ENCODE measurements at regions of chr6 and their contacts with region 1.

Region 1: GRCh38 chr6:156776840-156777576 is at the start of gene ARID1B:
- DNase-seq: peak; percentile 94
- H3K4me3 Mint-ChIP-seq: peak within 1 kb of the TSS; percentile 94
- H3K27ac Mint-ChIP-seq: peak within 1 kb of the TSS; percentile 99
- H3K4me1 Mint-ChIP-seq: peaks cover 26% of the 10 kb centered on the region
- H3K27me3 Mint-ChIP-seq: no peaks in the 10 kb centered on the region
- total RNA-seq, gene ARID1B: 61.7 and 67.5 TPM in 2 replicates

Region 2: GRCh38 chr6:155314092-155314772 is 1462.8 kb before region 1 on chr6 and contains the start of gene TFB1M:
- intact Hi-C with region 1: loop called (anchors 5 kb)
- DNase-seq: peak; percentile 100
- H3K4me3 Mint-ChIP-seq: peak within 1 kb of the TSS; percentile 99
- H3K27ac Mint-ChIP-seq: peak within 1 kb of the TSS; percentile 98
- H3K4me1 Mint-ChIP-seq: peaks cover 27% of the 10 kb centered on the region
- H3K27me3 Mint-ChIP-seq: peaks cover 2% of the 10 kb centered on the region
- total RNA-seq, gene TFB1M: 36.8 and 41.4 TPM in 2 replicates

Region 3: DNA sequence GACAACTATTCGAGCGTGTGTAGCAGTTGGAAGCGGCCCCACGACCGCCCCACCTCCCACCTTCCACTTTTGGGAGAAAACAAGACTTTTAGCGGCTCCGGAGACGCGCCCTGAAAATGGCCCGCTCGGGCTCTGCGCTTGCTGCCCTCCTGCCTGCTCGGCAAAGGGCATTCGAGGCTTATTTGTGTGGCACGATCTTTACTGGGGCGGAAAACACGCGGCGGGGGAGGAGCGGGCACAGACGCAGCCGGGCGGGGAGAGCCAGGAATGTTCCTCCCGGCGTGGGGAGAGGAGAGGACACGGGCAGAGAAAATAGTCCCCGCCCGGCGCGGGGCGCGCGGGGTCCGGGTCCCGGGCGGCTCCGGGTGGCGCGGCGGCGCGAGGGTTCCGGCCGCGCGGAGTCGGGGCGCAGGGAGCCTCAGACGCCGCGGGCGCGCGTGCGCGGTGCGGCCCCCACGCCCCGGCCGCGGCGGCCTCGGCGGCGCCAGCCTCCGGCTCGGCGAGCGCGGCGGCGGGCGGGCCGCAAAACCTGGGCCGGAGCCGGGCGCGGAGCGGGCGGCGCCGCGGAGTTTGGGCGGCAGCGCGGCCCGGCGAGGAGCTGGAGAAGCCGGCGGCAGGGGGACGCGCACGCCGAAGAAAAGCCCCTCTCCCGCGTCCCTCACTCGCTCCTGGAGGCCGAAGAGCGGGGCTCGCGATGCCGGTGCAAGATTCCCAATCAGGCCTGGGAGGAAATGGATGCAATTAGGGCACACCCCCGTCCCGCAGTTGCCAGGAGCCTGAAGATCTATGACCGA is 89.8 kb before region 1 on chr6:
- intact Hi-C with region 1: loop called (anchors 1 kb)
- DNase-seq: peak; percentile 94
- H3K4me3 Mint-ChIP-seq: peak overlapping the region; percentile 89
- H3K27ac Mint-ChIP-seq: peak overlapping the region; percentile 94
- H3K4me1 Mint-ChIP-seq: peaks cover 20% of the 10 kb centered on the region
- H3K27me3 Mint-ChIP-seq: peaks cover 11% of the 10 kb centered on the region

Region 4: DNA sequence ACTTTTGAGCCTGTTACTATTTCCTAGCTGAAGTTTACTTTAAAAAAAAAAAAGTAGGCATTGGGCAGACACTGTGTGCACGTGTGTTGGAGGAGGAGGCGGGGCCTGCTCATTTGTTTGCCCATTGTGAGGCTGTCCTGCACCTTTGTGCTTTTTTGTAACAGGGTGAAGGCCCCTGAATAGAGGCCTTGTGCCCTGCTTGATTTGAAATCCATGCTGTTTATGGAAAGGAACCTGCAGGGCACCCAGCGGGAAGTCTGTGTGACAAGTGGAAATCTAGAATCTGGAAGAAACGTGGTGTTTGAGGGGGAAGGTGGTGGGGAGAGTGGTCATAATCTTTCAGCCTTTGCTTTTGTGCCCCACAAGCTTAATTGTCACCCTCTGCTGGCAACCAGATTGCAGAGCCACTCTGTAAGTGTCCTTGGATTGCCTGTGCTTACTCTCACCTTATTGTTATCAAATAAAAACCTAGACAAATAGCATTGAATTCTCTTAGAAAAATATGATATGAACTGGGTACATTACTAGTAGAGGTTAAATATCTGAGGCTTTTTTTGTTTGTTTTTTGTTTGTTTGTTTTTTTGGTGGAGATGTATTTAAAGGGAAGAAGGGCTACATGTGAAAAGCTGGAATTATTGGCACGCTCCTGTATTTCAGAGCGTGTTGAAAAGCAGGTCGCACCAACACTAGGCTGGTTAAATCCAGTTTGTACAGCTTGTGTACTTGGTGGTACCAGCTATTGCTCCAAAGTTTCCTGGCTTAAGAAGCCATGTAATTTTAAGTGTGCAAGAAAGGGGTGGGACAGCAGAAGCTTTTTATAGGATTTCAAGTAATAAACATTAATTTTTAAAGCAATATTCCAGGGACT is 156.4 kb after region 1 on chr6:
- intact Hi-C with region 1: loop called (anchors 5 kb)
- DNase-seq: no peak
- H3K4me3 Mint-ChIP-seq: no peak overlapping the region
- H3K27ac Mint-ChIP-seq: no peak overlapping the region
- H3K4me1 Mint-ChIP-seq: peaks cover 27% of the 10 kb centered on the region
- H3K27me3 Mint-ChIP-seq: no peaks in the 10 kb centered on the region

Region 5: DNA sequence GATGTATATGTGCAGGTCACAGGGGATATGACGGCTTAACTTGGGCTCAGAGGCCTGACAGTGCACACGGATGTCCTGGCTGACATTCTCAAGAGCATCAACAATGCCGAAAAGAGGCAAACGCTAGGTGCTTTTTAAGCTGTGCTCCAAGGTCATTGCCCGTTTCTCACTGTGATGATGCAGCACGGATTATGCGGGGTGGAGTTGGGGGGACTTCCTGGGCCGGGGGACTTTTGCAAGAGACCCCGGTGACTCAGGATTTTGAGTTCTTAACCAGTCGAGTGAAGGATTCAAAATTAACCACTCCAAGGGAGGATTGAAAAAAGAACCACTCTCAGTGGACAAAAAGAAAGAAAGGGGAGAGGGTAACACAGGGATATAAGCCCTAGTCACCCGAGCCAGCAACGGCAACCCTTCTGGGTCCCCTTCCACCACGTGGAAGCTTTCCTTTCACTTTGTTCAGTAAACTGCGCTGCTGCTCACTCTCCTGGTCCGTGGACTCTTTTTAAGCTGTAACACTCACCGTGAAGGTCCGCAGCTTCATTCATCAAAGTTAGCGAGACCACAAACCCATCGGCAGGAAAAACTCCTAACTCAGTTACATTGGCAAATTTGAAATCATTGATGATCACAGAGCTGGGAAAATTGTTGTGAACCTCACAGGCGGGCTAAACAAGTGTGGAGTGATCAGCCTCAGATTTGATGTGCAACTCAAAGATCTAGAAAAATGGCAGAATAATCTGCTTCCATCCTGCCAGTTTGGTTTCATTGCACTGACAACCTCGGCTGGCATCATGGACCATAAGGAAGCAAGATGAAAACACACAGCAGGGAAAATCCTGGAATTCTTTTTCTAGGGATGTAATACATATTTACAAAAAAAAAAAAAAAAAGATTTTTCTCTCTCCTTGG is 199.5 kb after region 1 on chr6:
- intact Hi-C with region 1: loop called (anchors 5 kb)
- DNase-seq: peak; percentile 68
- H3K4me3 Mint-ChIP-seq: peak overlapping the region; percentile 82
- H3K27ac Mint-ChIP-seq: peak overlapping the region; percentile 86
- H3K4me1 Mint-ChIP-seq: peaks cover 28% of the 10 kb centered on the region
- H3K27me3 Mint-ChIP-seq: no peaks in the 10 kb centered on the region

Region 6: GRCh38 chr6:157099912-157100593 is 323.0 kb after region 1 on chr6:
- intact Hi-C with region 1: loop called (anchors 1 kb)
- DNase-seq: peak; percentile 84
- H3K4me3 Mint-ChIP-seq: peak overlapping the region; percentile 73
- H3K27ac Mint-ChIP-seq: peak overlapping the region; percentile 92
- H3K4me1 Mint-ChIP-seq: peaks cover 39% of the 10 kb centered on the region
- H3K27me3 Mint-ChIP-seq: no peaks in the 10 kb centered on the region

Region 7: GRCh38 chr6:157274471-157275226 is 497.6 kb after region 1 on chr6:
- intact Hi-C with region 1: loop called (anchors 5 kb)
- DNase-seq: peak; percentile 96
- H3K4me3 Mint-ChIP-seq: peak overlapping the region; percentile 85
- H3K27ac Mint-ChIP-seq: peak overlapping the region; percentile 86
- H3K4me1 Mint-ChIP-seq: peaks cover 7% of the 10 kb centered on the region
- H3K27me3 Mint-ChIP-seq: peaks cover 9% of the 10 kb centered on the region

Measured in activated CD4-positive, alpha-beta T cell treated with anti-CD3 and anti-CD28 coated beads, Interleukin-2, amount 10 ng/mL, durations not matched to agents 24 days and 14 days (primary cell).